ENCODE measurements at regions of chr7 and their contacts with region 1.

Region 1: DNA sequence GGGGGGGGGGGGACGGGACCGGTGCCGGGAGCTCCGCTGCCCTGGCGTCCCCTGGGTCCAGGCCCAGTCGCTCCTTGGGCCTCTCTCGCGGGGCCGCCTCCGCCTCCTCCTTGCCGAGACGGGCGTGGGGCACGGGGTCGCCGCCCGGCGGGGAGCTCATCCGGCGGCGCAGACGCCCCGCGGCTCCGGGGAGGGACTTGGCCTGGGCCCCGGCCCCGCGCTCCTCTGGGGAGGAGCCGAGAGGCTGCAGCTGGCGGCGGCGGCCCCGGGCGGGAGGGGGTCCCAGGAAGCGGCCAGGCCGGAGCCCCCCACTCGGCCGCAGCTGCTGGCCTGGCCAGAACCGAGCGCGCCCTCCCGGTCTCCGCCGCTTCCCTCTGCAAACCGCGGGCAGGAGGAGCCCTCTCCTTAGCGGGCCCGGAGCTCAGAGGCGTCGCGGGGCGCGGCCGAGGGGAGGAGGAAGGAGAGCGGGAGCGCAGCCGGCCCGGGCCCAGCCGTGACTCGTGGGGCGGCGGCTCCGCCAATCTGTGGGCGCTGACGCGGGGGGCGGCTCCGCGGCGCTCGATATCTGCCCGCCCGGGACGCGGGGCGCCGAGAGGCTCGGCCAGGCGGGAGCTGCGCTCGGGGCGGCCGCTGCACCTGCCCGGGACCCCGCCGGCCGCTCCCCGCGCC is at the start of gene FAM20C:
- DNase-seq: peak; percentile 85 to 90 (median 87)
- H3K4me3 ChIP-seq: peak within 1 kb of the TSS; percentile 50
- H3K27ac ChIP-seq: peak within 1 kb of the TSS; percentile 51 to 93
- H3K4me1 ChIP-seq: peaks cover 15% of the 10 kb centered on the region
- H3K27me3 ChIP-seq: no peaks in the 10 kb centered on the region
- CTCF ChIP-seq: no peak
- EP300 ChIP-seq: no peak
- POLR2A ChIP-seq: peak; percentile 69
- total RNA-seq, gene FAM20C: 20.5 to 80.4 (median 47.4) TPM

Region 2: GRCh38 chr7:148932-149855 is 42.9 kb before region 1 on chr7:
- intact Hi-C with region 1: loop called in 1 of 4 experiments (anchors 5 kb)
- DNase-seq: peak; percentile 97 to 99 (median 98)
- H3K4me3 ChIP-seq: peak overlapping the region; percentile 59
- H3K27ac ChIP-seq: peak overlapping the region; percentile 90 to 94
- H3K4me1 ChIP-seq: peaks cover 9% of the 10 kb centered on the region
- H3K27me3 ChIP-seq: no peaks in the 10 kb centered on the region
- CTCF ChIP-seq: no peak
- EP300 ChIP-seq: no peak
- POLR2A ChIP-seq: peak; percentile 87

Region 3: GRCh38 chr7:494261-494687 is 302.2 kb after region 1 on chr7:
- intact Hi-C with region 1: no loop called
- DNase-seq: no peak
- H3K4me3 ChIP-seq: no peak overlapping the region
- H3K27ac ChIP-seq: no peak overlapping the region
- H3K4me1 ChIP-seq: no peaks in the 10 kb centered on the region
- H3K27me3 ChIP-seq: no peaks in the 10 kb centered on the region
- CTCF ChIP-seq: no peak
- EP300 ChIP-seq: no peak
- POLR2A ChIP-seq: no peak